OCI-LY7 (cell line): ENCODE measurements at regions of chr2 and their contacts with region 1.

Region 1: GRCh38 chr2:161243905-161244304 is 64.3 kb upstream of the PSMD14 start:
- DNase-seq: peak; percentile 40
- H3K4me3 ChIP-seq: peak overlapping the region; percentile 73
- H3K27ac ChIP-seq: peak overlapping the region; percentile 65
- H3K4me1 ChIP-seq: peaks cover 47% of the 10 kb centered on the region
- CTCF ChIP-seq: no peak

Region 2: DNA sequence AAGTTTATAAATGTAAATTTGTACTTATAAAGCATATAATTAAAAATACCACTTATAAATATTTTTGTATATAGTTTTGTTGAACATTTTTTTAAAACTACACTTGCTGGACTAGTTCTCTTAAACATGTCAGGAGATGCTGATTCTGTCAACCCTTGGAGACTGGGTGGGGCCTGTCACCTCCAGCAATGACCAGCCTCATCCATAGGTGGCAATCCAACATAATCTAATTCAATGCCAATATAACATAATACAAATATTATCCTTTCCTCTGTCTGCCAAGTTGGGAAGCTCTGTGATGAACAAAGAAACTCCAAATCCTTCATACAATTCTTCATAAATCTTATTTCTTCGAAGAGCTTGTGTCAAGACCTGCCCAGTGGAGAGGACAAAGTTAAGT is 890.7 kb before region 1 on chr2:
- CTCF ChIA-PET with region 1: no interaction called
- POLR2A ChIA-PET with region 1: no interaction called
- intact Hi-C with region 1: no loop called
- DNase-seq: peak; percentile 33
- H3K4me3 ChIP-seq: no peak overlapping the region
- H3K27ac ChIP-seq: no peak overlapping the region
- H3K4me1 ChIP-seq: no peaks in the 10 kb centered on the region
- CTCF ChIP-seq: peak; percentile 82

Region 3: GRCh38 chr2:161160226-161161069 is 83.5 kb before region 1 on chr2 and contains the start of gene TANK:
- CTCF ChIA-PET with region 1: no interaction called
- POLR2A ChIA-PET with region 1: interaction called, 3 read pairs
- intact Hi-C with region 1: loop called (anchors 2 kb)
- DNase-seq: peak; percentile 97
- H3K4me3 ChIP-seq: peak within 1 kb of the TSS; percentile 85
- H3K27ac ChIP-seq: peak within 1 kb of the TSS; percentile 91
- H3K4me1 ChIP-seq: peaks cover 29% of the 10 kb centered on the region
- CTCF ChIP-seq: 0 out of 2 replicates have a peak, but pooled peaks have one; percentile 12
- total RNA-seq, gene TANK: 43.4 and 52.6 TPM in 2 replicates